Naive thymus-derived CD4-positive, alpha-beta T cell (primary cell): ENCODE measurements at regions of chr11 and their contacts with region 1.

Region 1: DNA sequence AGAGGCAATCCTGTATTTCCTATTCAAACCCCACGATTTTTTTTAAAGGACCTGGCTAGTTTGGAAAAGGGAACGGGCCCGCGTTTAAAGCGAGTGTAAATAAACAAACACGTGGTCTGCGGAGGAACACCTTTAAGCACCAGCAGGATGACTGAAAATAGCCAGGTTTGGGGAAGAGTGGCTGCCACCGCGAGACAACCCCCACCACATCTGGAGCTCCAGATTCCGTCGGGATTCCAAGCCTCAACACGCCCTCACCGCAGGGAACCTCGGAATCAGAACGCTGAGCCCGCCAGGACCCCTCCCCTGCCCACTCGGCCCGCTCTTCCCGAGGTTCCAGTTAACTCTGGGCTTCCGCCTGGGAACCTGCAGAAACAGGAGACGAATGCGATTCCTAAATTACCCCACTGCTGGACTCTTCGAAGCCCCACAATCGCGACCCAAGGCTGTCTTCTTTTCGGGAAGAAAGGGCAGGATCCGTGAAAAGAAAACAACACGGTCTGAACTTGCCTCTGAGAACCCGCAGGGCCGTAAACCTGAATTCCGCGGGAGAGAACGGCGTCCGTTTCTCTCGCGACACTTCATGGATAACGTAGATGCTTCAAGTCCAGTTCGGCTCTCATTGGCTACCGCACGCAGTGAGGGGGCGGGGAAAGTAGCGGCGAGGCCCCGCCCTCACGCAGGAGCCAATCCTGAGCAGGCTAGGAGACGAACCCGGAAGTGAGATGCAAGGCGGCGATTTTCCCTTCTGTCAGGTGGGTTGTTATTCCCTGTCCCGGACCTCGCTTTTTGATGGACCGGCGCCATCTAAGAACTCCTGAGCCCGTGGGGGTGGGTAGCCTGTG is at the starts of genes ANKRD49 and MRE11:
- DNase-seq: peak; percentile 92 to 98 (median 97)
- ATAC-seq: peak; percentile 100
- H3K4me3 ChIP-seq: peak within 1 kb of the TSS; percentile 94
- H3K4me3 Mint-ChIP-seq: peak within 1 kb of the TSS; percentile 92 to 99 (median 96)
- H3K27ac ChIP-seq: peak within 1 kb of the TSS; percentile 93
- H3K27ac Mint-ChIP-seq: peak within 1 kb of the TSS; percentile 91 to 99 (median 97)
- H3K4me1 ChIP-seq: peaks cover 18 to 28% of the 10 kb centered on the region in 2 donors
- H3K4me1 Mint-ChIP-seq: peaks cover 31 to 64% (median 42%) of the 10 kb centered on the region in 7 donors
- H3K27me3 ChIP-seq: no peaks in the 10 kb centered on the region
- H3K27me3 Mint-ChIP-seq: no peaks in the 10 kb centered on the region
- total RNA-seq, gene ANKRD49: 25.6 to 64.4 (median 44.5) TPM
- total RNA-seq, gene MRE11: 19.0 to 45.5 (median 40.1) TPM

Region 2: DNA sequence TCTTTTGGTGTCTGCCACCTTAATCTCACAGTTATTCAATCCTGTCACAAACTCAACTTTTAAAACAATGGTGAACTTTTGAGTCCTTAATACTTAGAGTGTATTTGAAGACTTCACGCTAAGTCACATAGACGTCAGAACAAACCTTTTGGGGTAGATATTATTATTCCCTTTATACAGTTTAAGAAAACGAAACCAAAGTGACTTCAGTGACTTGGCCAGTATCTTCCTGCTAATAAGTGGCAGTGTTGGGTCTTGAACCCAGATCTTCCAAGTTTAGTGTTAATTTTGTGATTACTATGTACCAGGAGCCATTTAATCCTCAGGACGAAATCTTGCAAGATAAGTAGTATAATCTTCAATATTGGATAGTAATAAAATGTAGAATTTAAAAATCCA is 831.3 kb before region 1 on chr11:
- CTCF ChIA-PET with region 1: no interaction called
- POLR2A ChIA-PET with region 1: interaction called, 3 read pairs
- intact Hi-C with region 1: loop called (anchors 5 kb)
- DNase-seq: no peak
- ATAC-seq: no peak
- H3K4me3 ChIP-seq: peak overlapping the region; percentile 98
- H3K4me3 Mint-ChIP-seq: peak overlapping the region; percentile 76 to 96 (median 88)
- H3K27ac ChIP-seq: peak overlapping the region; percentile 88
- H3K27ac Mint-ChIP-seq: peak overlapping the region; percentile 60 to 95 (median 90)
- H3K4me1 ChIP-seq: peaks cover 8 to 11% of the 10 kb centered on the region in 2 donors
- H3K4me1 Mint-ChIP-seq: peaks cover 0 to 52% (median 37%) of the 10 kb centered on the region in 7 donors
- H3K27me3 ChIP-seq: no peaks in the 10 kb centered on the region
- H3K27me3 Mint-ChIP-seq: peaks cover 0 to 2% (median 0%) of the 10 kb centered on the region in 5 donors

Region 3: GRCh38 chr11:94020777-94021481 is 472.6 kb before region 1 on chr11 and contains the start of gene HEPHL1:
- CTCF ChIA-PET with region 1: no interaction called
- POLR2A ChIA-PET with region 1: no interaction called
- intact Hi-C with region 1: no loop called
- DNase-seq: no peak
- ATAC-seq: no peak
- H3K4me3 ChIP-seq: no peak within 1 kb of the TSS
- H3K4me3 Mint-ChIP-seq: no peak within 1 kb of the TSS
- H3K27ac ChIP-seq: no peak within 1 kb of the TSS
- H3K27ac Mint-ChIP-seq: no peak within 1 kb of the TSS
- H3K4me1 ChIP-seq: no peaks in the 10 kb centered on the region
- H3K4me1 Mint-ChIP-seq: no peaks in the 10 kb centered on the region
- H3K27me3 ChIP-seq: no peaks in the 10 kb centered on the region
- H3K27me3 Mint-ChIP-seq: peaks cover 0 to 20% (median 0%) of the 10 kb centered on the region in 5 donors
- total RNA-seq, gene HEPHL1: not detected

Region 4: GRCh38 chr11:94128746-94129511 is 364.6 kb before region 1 on chr11 and contains the start of gene PANX1:
- CTCF ChIA-PET with region 1: no interaction called
- POLR2A ChIA-PET with region 1: no interaction called
- intact Hi-C with region 1: loop called (anchors 1 to 2 kb)
- DNase-seq: peak; percentile 48 to 80 (median 74)
- ATAC-seq: peak; percentile 87
- H3K4me3 ChIP-seq: peak within 1 kb of the TSS; percentile 97
- H3K4me3 Mint-ChIP-seq: peak within 1 kb of the TSS in 2 of 10 donors; percentile 85 to 92
- H3K27ac ChIP-seq: peak within 1 kb of the TSS; percentile 73
- H3K27ac Mint-ChIP-seq: peak within 1 kb of the TSS; percentile 77 to 96 (median 89)
- H3K4me1 ChIP-seq: peaks cover 21 to 29% of the 10 kb centered on the region in 2 donors
- H3K4me1 Mint-ChIP-seq: peaks cover 18 to 32% (median 27%) of the 10 kb centered on the region in 7 donors
- H3K27me3 ChIP-seq: no peaks in the 10 kb centered on the region
- H3K27me3 Mint-ChIP-seq: no peaks in the 10 kb centered on the region
- total RNA-seq, gene PANX1: 5.6 to 14.8 (median 6.1) TPM

Region 5: GRCh38 chr11:94511932-94512781 is 18.7 kb after region 1 on chr11 and contains the start of gene C11orf97:
- CTCF ChIA-PET with region 1: no interaction called
- POLR2A ChIA-PET with region 1: interaction called, 5 read pairs
- intact Hi-C with region 1: loop called in 1 of 2 experiments (anchors 2 kb)
- DNase-seq: peak; percentile 27 to 47 (median 37)
- ATAC-seq: peak; percentile 85
- H3K4me3 ChIP-seq: peak within 1 kb of the TSS; percentile 49
- H3K4me3 Mint-ChIP-seq: peak within 1 kb of the TSS; percentile 75 to 86 (median 82)
- H3K27ac ChIP-seq: no peak within 1 kb of the TSS
- H3K27ac Mint-ChIP-seq: peak within 1 kb of the TSS in 3 of 9 donors; percentile 19 to 43 (median 38)
- H3K4me1 ChIP-seq: peaks cover 7 to 13% of the 10 kb centered on the region in 2 donors
- H3K4me1 Mint-ChIP-seq: peaks cover 12 to 22% (median 16%) of the 10 kb centered on the region in 7 donors
- H3K27me3 ChIP-seq: peaks cover 3 to 6% of the 10 kb centered on the region in 2 donors
- H3K27me3 Mint-ChIP-seq: peaks cover 24 to 81% (median 36%) of the 10 kb centered on the region in 5 donors
- total RNA-seq, gene C11orf97: not detected

Region 6: GRCh38 chr11:94948070-94948617 is 454.6 kb after region 1 on chr11:
- CTCF ChIA-PET with region 1: no interaction called
- POLR2A ChIA-PET with region 1: no interaction called
- intact Hi-C with region 1: no loop called
- DNase-seq: no peak
- ATAC-seq: no peak
- H3K4me3 ChIP-seq: no peak overlapping the region
- H3K4me3 Mint-ChIP-seq: no peak overlapping the region
- H3K27ac ChIP-seq: no peak overlapping the region
- H3K27ac Mint-ChIP-seq: no peak overlapping the region
- H3K4me1 ChIP-seq: no peaks in the 10 kb centered on the region
- H3K4me1 Mint-ChIP-seq: peaks cover 0 to 10% (median 5%) of the 10 kb centered on the region in 7 donors
- H3K27me3 ChIP-seq: no peaks in the 10 kb centered on the region
- H3K27me3 Mint-ChIP-seq: peaks cover 0 to 7% (median 4%) of the 10 kb centered on the region in 5 donors

Region 7: DNA sequence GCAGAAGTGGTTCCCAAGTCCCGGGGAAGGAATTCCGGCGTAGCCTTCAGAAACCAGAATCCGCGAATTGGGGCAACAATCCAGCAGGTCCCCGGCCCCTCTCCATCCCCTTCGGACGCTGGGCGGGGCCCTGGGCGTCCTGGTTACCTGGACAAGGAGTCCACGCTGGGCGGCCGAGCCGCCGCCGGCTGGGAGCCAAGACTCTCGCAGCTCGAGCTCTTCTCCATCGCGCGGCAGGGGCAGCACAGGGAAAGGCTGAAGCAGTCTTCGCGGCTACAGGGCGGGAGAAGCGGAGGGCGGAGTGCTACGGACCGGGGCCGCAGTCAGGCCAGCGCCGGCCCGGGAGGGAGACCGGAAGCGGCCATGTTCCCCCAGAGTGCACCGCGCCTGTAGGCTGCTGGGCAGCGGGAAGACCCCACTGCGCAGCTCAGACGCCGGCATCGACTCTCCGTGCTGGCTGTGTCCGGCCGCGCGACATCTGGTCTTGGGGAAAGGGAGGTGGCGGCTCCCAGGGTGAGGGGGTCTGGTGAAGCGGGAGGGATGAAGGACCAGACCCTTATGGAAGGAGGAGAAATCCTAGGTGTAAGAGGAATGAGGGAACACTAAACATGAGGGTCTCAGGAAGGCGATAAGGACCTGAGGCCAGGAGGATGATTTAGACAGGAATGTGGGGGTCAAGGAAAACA is 1430.4 kb after region 1 on chr11 and contains the start of gene MTMR2:
- CTCF ChIA-PET with region 1: no interaction called
- POLR2A ChIA-PET with region 1: no interaction called
- intact Hi-C with region 1: loop called in 1 of 2 experiments (anchors 10 kb)
- DNase-seq: peak in 8 of 9 donors; percentile 16 to 70 (median 26)
- ATAC-seq: peak; percentile 87
- H3K4me3 ChIP-seq: peak within 1 kb of the TSS; percentile 91
- H3K4me3 Mint-ChIP-seq: peak within 1 kb of the TSS; percentile 85 to 98 (median 94)
- H3K27ac ChIP-seq: peak within 1 kb of the TSS; percentile 65
- H3K27ac Mint-ChIP-seq: peak within 1 kb of the TSS; percentile 80 to 96 (median 90)
- H3K4me1 ChIP-seq: peaks cover 0 to 12% of the 10 kb centered on the region in 2 donors
- H3K4me1 Mint-ChIP-seq: peaks cover 18 to 37% (median 25%) of the 10 kb centered on the region in 7 donors
- H3K27me3 ChIP-seq: no peaks in the 10 kb centered on the region
- H3K27me3 Mint-ChIP-seq: peaks cover 5 to 11% (median 8%) of the 10 kb centered on the region in 5 donors
- total RNA-seq, gene MTMR2: 9.0 to 20.8 (median 10.5) TPM